ENCODE measurements at regions of chr1 and their contacts with region 1.

Region 1: DNA sequence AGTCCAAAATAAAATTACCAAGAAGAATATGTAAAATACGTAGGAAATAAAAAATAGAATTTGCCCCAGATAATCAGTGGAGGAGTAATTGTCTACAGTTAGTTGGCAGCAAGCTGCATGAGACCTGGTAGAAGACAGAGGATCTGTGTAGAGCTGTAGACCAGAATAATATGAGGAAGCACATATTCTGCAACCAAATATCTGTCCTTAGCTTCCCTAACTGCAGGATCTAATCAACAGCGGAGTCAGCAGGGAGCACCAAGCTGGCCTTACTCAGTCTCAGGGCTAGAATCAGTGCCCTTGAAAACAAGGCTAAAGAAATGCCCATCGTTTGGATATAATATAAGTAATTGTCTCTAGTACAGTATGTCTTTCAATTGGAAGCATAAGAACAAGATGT is 6.1 kb upstream of the GCSAML start:
- DNase-seq: no peak
- ATAC-seq: no peak
- H3K4me3 Mint-ChIP-seq: no peak overlapping the region
- H3K27ac Mint-ChIP-seq: no peak overlapping the region
- H3K4me1 Mint-ChIP-seq: peaks cover 10% of the 10 kb centered on the region
- H3K27me3 Mint-ChIP-seq: no peaks in the 10 kb centered on the region
- CTCF ChIP-seq: no peak

Region 2: DNA sequence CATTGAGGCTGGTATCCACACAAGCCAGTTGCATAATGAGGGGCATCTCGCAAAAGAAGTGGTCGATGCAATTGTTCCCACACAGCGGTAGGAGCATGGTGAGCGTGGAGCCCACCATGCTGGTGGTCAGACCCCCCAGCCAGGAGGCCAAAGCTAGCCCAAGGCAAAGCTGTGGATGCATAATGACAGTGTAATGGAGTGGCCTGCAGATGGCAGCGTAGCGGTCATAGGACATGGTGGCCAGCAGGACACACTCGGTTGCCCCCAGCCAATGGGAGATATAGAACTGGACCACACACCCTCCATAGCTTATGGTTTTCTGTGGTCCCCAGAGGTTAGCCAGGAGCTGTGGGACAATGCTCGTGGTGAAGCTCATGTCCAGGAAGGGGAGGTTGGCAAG is 10.9 kb before region 1 on chr1:
- CTCF ChIA-PET with region 1: interaction called, 18 read pairs
- POLR2A ChIA-PET with region 1: no interaction called
- DNase-seq: peak; percentile 42
- ATAC-seq: peak; percentile 90
- H3K4me3 Mint-ChIP-seq: no peak overlapping the region
- H3K27ac Mint-ChIP-seq: no peak overlapping the region
- H3K4me1 Mint-ChIP-seq: no peaks in the 10 kb centered on the region
- H3K27me3 Mint-ChIP-seq: no peaks in the 10 kb centered on the region
- CTCF ChIP-seq: no peak

Region 3: DNA sequence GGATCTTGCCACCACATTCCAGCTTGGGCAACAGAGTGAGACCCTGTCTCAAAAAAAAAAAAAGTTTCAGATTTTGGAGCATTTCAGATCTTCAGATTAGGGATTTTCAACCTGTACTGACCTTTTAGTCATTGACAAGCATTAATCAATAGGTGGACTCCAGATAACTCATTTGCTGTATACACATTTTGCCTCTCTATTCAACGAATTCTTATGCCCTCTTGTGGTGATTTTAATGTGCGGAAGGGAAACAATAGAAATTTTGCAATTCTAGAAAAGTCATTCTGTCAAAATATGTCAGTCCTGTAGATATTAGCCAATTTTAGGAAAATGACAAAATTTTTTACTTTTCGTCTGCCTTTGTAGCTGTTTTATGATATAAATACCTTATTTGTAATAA is 33.7 kb after region 1 on chr1:
- CTCF ChIA-PET with region 1: no interaction called
- POLR2A ChIA-PET with region 1: no interaction called
- DNase-seq: no peak
- ATAC-seq: no peak; the same call in 1 of the 2 replicates
- H3K4me3 Mint-ChIP-seq: no peak overlapping the region
- H3K27ac Mint-ChIP-seq: no peak overlapping the region
- H3K4me1 Mint-ChIP-seq: no peaks in the 10 kb centered on the region; the same call in 1 of the 2 replicates
- H3K27me3 Mint-ChIP-seq: no peaks in the 10 kb centered on the region; the same call in 1 of the 2 replicates
- CTCF ChIP-seq: peak; percentile 19; the same call in 1 of the 2 replicates

Region 4: GRCh38 chr1:247701338-247701737 is 158.5 kb after region 1 on chr1:
- CTCF ChIA-PET with region 1: no interaction called
- POLR2A ChIA-PET with region 1: no interaction called
- DNase-seq: no peak
- ATAC-seq: no peak
- H3K4me3 Mint-ChIP-seq: no peak overlapping the region
- H3K27ac Mint-ChIP-seq: no peak overlapping the region
- H3K4me1 Mint-ChIP-seq: no peaks in the 10 kb centered on the region
- H3K27me3 Mint-ChIP-seq: peaks cover 5% of the 10 kb centered on the region; the same call in 1 of the 2 replicates
- CTCF ChIP-seq: no peak